Colonic mucosa (tissue), 4 donors: ENCODE measurements at regions of chr12 and their contacts with region 1.

Region 1: DNA sequence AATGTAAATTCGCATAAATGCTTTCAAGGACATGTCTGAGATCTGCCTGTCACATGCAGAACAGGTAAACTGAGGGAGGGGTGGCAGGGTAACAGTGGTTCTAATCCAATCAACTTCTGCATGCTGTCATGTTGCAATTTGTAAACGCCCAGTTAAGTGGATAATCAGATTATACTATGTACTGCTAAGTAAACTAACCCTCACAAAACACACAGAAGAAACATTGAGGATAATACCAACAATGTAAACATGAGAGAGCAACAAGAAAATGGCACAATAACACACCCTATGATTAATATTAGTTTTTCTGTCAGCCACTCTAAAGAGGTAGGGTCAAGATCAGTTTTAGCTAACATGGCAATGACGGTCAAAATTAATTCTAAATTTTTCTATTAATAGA is 123.7 kb downstream of the KIF21A start:
- DNase-seq: no peak
- H3K4me3 ChIP-seq: no peak overlapping the region
- H3K27ac ChIP-seq: no peak overlapping the region
- H3K4me1 ChIP-seq: no peaks in the 10 kb centered on the region
- H3K27me3 ChIP-seq: no peaks in the 10 kb centered on the region
- CTCF ChIP-seq: no peak

Region 2: GRCh38 chr12:39692258-39692853 is 373.2 kb after region 1 on chr12:
- intact Hi-C with region 1: loop called (anchors 10 kb)
- DNase-seq: no peak
- H3K4me3 ChIP-seq: no peak overlapping the region
- H3K27ac ChIP-seq: no peak overlapping the region
- H3K4me1 ChIP-seq: no peaks in the 10 kb centered on the region
- H3K27me3 ChIP-seq: no peaks in the 10 kb centered on the region
- CTCF ChIP-seq: no peak